ENCODE measurements at regions of chr17 and their contacts with region 1.

Region 1: GRCh38 chr17:13306310-13306962 is 288.6 kb upstream of the ELAC2 start:
- DNase-seq: peak; percentile 24 to 75 (median 41)
- ATAC-seq: peak; percentile 90
- H3K4me3 ChIP-seq: no peak overlapping the region
- H3K27ac ChIP-seq: no peak overlapping the region
- H3K4me1 ChIP-seq: no peaks in the 10 kb centered on the region
- H3K27me3 ChIP-seq: no peaks in the 10 kb centered on the region
- CTCF ChIP-seq: peak; percentile 49 to 66 (median 54); a peak in 5 of 6 replicates
- EP300 ChIP-seq: 0 out of 2 replicates have a peak, but pooled peaks have one; percentile 14
- POLR2A ChIP-seq: no peak
- RAD21 ChIP-seq: peak; percentile 53 to 79

Region 2: DNA sequence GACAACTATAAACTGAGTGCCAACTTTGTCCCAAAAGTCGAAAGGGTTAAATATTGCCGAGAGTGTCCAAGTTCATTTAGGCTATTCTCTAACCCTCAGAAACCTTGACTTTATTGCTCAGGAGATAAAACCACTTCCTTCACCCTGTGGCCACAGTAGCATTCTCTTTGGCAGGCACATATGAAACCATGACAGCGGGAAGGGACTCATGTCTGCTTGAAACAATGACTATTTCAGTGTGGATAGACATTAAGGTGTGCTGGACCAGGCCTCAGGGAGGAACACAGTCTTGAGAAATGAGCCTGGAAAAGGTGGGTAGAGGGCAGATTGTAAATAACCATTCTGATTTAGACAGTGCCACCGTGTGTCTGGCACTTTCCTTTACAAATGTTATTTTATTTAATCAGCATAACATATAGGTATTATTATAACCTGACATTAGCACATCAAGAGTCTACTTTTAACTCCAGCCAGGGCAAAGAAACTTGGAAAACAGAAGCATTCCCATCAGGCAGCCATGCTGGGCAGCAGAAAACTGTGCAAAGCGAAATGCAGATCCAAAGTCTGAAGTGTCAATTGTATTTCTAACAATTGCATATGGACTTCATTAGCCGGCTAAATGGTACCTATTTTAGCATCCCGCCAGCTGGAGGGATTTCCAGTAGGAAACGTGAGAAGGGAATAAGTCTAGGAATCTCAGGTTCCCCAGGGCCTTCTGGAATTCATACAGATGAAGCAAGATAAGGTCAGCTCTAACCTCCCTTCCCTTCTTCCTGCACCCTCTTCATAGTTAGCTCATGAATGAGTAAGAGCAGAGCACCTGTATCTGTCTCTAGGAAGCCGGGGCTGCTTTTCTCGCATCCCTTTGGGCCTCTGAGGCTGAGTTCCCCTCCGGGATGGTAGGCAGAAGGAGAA is 75.8 kb before region 1 on chr17:
- CTCF ChIA-PET with region 1: no interaction called
- POLR2A ChIA-PET with region 1: no interaction called
- in situ Hi-C with region 1: no loop called
- intact Hi-C with region 1: no loop called
- DNase-seq: no peak
- ATAC-seq: no peak
- H3K4me3 ChIP-seq: no peak overlapping the region
- H3K27ac ChIP-seq: no peak overlapping the region
- H3K4me1 ChIP-seq: no peaks in the 10 kb centered on the region
- H3K27me3 ChIP-seq: no peaks in the 10 kb centered on the region
- CTCF ChIP-seq: no peak
- EP300 ChIP-seq: no peak
- POLR2A ChIP-seq: no peak
- RAD21 ChIP-seq: no peak

Region 3: DNA sequence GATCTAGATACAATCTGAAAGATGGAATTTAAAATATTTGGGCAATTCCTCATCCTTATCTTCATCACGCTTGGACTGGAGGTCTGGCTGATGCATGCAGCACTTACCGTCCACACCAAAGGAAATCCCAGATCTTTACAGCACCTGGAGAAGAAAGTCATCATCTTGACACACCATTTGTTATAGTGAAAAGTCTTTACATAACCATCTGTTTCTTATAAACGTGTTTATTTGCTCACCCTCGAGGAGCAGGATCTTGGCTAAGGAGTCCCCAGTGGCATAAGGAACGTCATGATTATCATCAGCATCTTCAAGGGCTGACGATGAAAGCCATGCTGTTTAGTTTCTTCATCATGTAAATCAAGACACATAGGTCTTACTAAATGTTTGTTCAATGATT is 39.9 kb before region 1 on chr17:
- CTCF ChIA-PET with region 1: no interaction called
- POLR2A ChIA-PET with region 1: no interaction called
- in situ Hi-C with region 1: no loop called
- intact Hi-C with region 1: no loop called
- DNase-seq: no peak
- ATAC-seq: no peak
- H3K4me3 ChIP-seq: no peak overlapping the region
- H3K27ac ChIP-seq: no peak overlapping the region
- H3K4me1 ChIP-seq: no peaks in the 10 kb centered on the region
- H3K27me3 ChIP-seq: no peaks in the 10 kb centered on the region
- CTCF ChIP-seq: no peak
- EP300 ChIP-seq: no peak
- POLR2A ChIP-seq: no peak
- RAD21 ChIP-seq: no peak

Region 4: GRCh38 chr17:13415807-13416416 is 109.5 kb after region 1 on chr17:
- CTCF ChIA-PET with region 1: no interaction called
- POLR2A ChIA-PET with region 1: no interaction called
- in situ Hi-C with region 1: no loop called
- intact Hi-C with region 1: no loop called
- DNase-seq: peak; percentile 10 to 73 (median 22)
- ATAC-seq: peak; percentile 63
- H3K4me3 ChIP-seq: no peak overlapping the region
- H3K27ac ChIP-seq: no peak overlapping the region
- H3K4me1 ChIP-seq: peaks cover 0 to 15% of the 10 kb centered on the region in 2 experiments; a peak in 3 of 5 replicates
- H3K27me3 ChIP-seq: no peaks in the 10 kb centered on the region
- CTCF ChIP-seq: peak in 1 of 3 experiments; percentile 8; a peak in 2 of 6 replicates
- EP300 ChIP-seq: peak; percentile 49
- POLR2A ChIP-seq: no peak
- RAD21 ChIP-seq: no peak

Region 5: GRCh38 chr17:13925579-13925978 is 619.1 kb after region 1 on chr17:
- CTCF ChIA-PET with region 1: no interaction called
- POLR2A ChIA-PET with region 1: no interaction called
- in situ Hi-C with region 1: no loop called
- intact Hi-C with region 1: loop called (anchors 10 kb)
- DNase-seq: peak in 2 of 4 experiments; percentile 20 to 32
- ATAC-seq: peak; percentile 77
- H3K4me3 ChIP-seq: no peak overlapping the region
- H3K27ac ChIP-seq: no peak overlapping the region
- H3K4me1 ChIP-seq: no peaks in the 10 kb centered on the region
- H3K27me3 ChIP-seq: peaks cover 0 to 9% of the 10 kb centered on the region in 2 experiments; a peak in 1 of 5 replicates
- CTCF ChIP-seq: peak; percentile 47 to 59 (median 54)
- EP300 ChIP-seq: no peak
- POLR2A ChIP-seq: no peak
- RAD21 ChIP-seq: peak; percentile 25 to 59